ENCODE measurements at regions of chr22 and their contacts with region 1.

Region 1: GRCh38 chr22:35631597-35631996 is 14.5 kb upstream of the MB start:
- DNase-seq: peak in 1 of 2 experiments; percentile 81
- H3K4me3 ChIP-seq: no peak overlapping the region
- H3K4me1 ChIP-seq: peaks cover 6% of the 10 kb centered on the region; the same call in 1 of the 2 replicates
- H3K27me3 ChIP-seq: no peaks in the 10 kb centered on the region

Region 2: GRCh38 chr22:34975721-34976120 is 655.9 kb before region 1 on chr22:
- in situ Hi-C with region 1: no loop called
- DNase-seq: no peak
- H3K4me3 ChIP-seq: no peak overlapping the region
- H3K4me1 ChIP-seq: no peaks in the 10 kb centered on the region
- H3K27me3 ChIP-seq: no peaks in the 10 kb centered on the region

Region 3: GRCh38 chr22:35498026-35498800 is 133.4 kb before region 1 on chr22:
- in situ Hi-C with region 1: no loop called
- DNase-seq: no peak
- H3K4me3 ChIP-seq: no peak overlapping the region
- H3K4me1 ChIP-seq: no peaks in the 10 kb centered on the region
- H3K27me3 ChIP-seq: peaks cover 13% of the 10 kb centered on the region

Region 4: GRCh38 chr22:35914665-35915476 is 283.3 kb after region 1 on chr22:
- in situ Hi-C with region 1: loop called (anchors 10 kb)
- DNase-seq: peak; percentile 85 to 89
- H3K4me3 ChIP-seq: peak overlapping the region; percentile 19
- H3K4me1 ChIP-seq: peaks cover 38% of the 10 kb centered on the region
- H3K27me3 ChIP-seq: no peaks in the 10 kb centered on the region